B cell (primary cell): ENCODE measurements at regions of chr3 and their contacts with region 1.

Region 1: GRCh38 chr3:66394019-66394752 is 106.6 kb downstream of the LRIG1 start:
- DNase-seq: peak; percentile 79
- ATAC-seq: peak; percentile 88
- H3K4me3 ChIP-seq: peak overlapping the region; percentile 37 to 71 (median 58)
- H3K4me3 Mint-ChIP-seq: peak overlapping the region; percentile 92
- H3K27ac ChIP-seq: peak overlapping the region; percentile 66 to 72
- H3K27ac Mint-ChIP-seq: peak overlapping the region; percentile 92
- H3K4me1 ChIP-seq: peaks cover 35 to 48% of the 10 kb centered on the region in 2 donors
- H3K4me1 Mint-ChIP-seq: peaks cover 53% of the 10 kb centered on the region
- H3K27me3 ChIP-seq: no peaks in the 10 kb centered on the region
- H3K27me3 Mint-ChIP-seq: no peaks in the 10 kb centered on the region
- CTCF ChIP-seq: no peak

Region 2: GRCh38 chr3:66220602-66221377 is 173.4 kb before region 1 on chr3 and contains the start of gene SLC25A26:
- CTCF ChIA-PET with region 1: no interaction called
- POLR2A ChIA-PET with region 1: no interaction called
- intact Hi-C with region 1: loop called (anchors 5 kb)
- DNase-seq: peak; percentile 96
- ATAC-seq: peak; percentile 95
- H3K4me3 ChIP-seq: peak within 1 kb of the TSS; percentile 74 to 96 (median 79)
- H3K4me3 Mint-ChIP-seq: peak within 1 kb of the TSS; percentile 100
- H3K27ac ChIP-seq: peak within 1 kb of the TSS; percentile 64 to 83
- H3K27ac Mint-ChIP-seq: peak within 1 kb of the TSS; percentile 96
- H3K4me1 ChIP-seq: peaks cover 10 to 14% of the 10 kb centered on the region in 2 donors
- H3K4me1 Mint-ChIP-seq: peaks cover 35% of the 10 kb centered on the region
- H3K27me3 ChIP-seq: no peaks in the 10 kb centered on the region
- H3K27me3 Mint-ChIP-seq: peaks cover 6% of the 10 kb centered on the region
- CTCF ChIP-seq: no peak
- total RNA-seq, gene SLC25A26: 19.7 and 23.8 TPM in 2 replicates

Region 3: GRCh38 chr3:66336333-66336766 is 57.8 kb before region 1 on chr3:
- CTCF ChIA-PET with region 1: no interaction called
- POLR2A ChIA-PET with region 1: no interaction called
- intact Hi-C with region 1: loop called (anchors 5 kb)
- DNase-seq: no peak
- ATAC-seq: no peak
- H3K4me3 ChIP-seq: no peak overlapping the region
- H3K4me3 Mint-ChIP-seq: no peak overlapping the region
- H3K27ac ChIP-seq: no peak overlapping the region
- H3K27ac Mint-ChIP-seq: no peak overlapping the region
- H3K4me1 ChIP-seq: no peaks in the 10 kb centered on the region
- H3K4me1 Mint-ChIP-seq: peaks cover 15% of the 10 kb centered on the region
- H3K27me3 ChIP-seq: no peaks in the 10 kb centered on the region
- H3K27me3 Mint-ChIP-seq: no peaks in the 10 kb centered on the region
- CTCF ChIP-seq: no peak